ENCODE measurements at regions of chr10 and their contacts with region 1.

Region 1: DNA sequence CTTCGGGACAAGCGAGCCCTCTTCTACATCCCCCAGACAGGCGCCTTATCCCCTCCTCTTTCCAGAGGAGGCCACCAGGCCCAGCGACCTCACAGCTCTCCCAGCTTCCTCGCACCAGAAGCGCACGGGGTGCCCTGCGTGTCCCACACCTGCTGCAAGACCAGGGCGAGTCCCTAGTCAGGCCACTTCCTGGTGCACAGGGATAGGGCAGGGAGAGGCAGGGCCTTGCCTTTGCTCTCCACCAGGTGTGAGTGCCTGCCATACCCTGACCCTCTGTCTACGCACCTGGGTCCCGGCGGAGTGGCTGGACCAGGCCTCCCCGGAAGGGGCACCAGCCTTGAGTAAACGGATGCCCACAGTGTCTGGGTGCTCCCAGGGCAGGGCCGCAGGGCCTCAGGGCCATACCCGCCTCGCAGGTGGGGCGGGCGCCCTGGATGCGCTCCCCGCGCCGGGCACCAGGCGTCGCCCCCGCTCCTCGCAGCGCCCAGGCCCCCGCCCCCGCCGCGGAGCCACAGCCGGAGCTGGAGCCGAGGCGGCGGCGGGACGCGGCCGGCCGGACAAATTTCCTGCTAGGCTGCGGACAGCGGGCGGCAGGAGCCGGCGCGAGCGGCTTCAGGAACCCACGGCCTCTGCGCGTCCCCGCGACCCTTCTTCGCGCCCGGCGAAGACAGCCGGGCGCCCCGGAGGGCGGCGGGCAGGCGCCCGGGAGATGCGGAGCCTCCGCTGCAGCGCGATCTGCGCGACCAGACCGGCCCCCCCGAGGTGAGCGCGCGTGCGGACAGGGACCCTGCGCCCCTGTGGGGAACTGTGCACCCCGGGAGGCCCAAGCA is at the start of gene PTPRE:
- DNase-seq: peak in 1 of 2 donors; percentile 83
- H3K4me3 ChIP-seq: peak within 1 kb of the TSS; percentile 67 to 88
- H3K27ac ChIP-seq: peak within 1 kb of the TSS; percentile 72 to 91
- H3K4me1 ChIP-seq: peaks cover 0 to 11% of the 10 kb centered on the region in 2 donors
- H3K27me3 ChIP-seq: no peaks in the 10 kb centered on the region
- CTCF ChIP-seq: peak; percentile 56 to 97 (median 62)
- total RNA-seq, gene PTPRE: 14.5 TPM

Region 2: GRCh38 chr10:125982260-125982948 is 1924.4 kb before region 1 on chr10:
- intact Hi-C with region 1: no loop called
- DNase-seq: no peak
- H3K4me3 ChIP-seq: no peak overlapping the region
- H3K27ac ChIP-seq: no peak overlapping the region
- H3K4me1 ChIP-seq: no peaks in the 10 kb centered on the region
- H3K27me3 ChIP-seq: no peaks in the 10 kb centered on the region
- CTCF ChIP-seq: peak; percentile 59 to 70 (median 60)

Region 3: GRCh38 chr10:127797339-127797738 is 109.4 kb before region 1 on chr10:
- intact Hi-C with region 1: no loop called
- DNase-seq: no peak
- H3K4me3 ChIP-seq: no peak overlapping the region
- H3K27ac ChIP-seq: no peak overlapping the region
- H3K4me1 ChIP-seq: no peaks in the 10 kb centered on the region
- H3K27me3 ChIP-seq: no peaks in the 10 kb centered on the region
- CTCF ChIP-seq: no peak

Region 4: DNA sequence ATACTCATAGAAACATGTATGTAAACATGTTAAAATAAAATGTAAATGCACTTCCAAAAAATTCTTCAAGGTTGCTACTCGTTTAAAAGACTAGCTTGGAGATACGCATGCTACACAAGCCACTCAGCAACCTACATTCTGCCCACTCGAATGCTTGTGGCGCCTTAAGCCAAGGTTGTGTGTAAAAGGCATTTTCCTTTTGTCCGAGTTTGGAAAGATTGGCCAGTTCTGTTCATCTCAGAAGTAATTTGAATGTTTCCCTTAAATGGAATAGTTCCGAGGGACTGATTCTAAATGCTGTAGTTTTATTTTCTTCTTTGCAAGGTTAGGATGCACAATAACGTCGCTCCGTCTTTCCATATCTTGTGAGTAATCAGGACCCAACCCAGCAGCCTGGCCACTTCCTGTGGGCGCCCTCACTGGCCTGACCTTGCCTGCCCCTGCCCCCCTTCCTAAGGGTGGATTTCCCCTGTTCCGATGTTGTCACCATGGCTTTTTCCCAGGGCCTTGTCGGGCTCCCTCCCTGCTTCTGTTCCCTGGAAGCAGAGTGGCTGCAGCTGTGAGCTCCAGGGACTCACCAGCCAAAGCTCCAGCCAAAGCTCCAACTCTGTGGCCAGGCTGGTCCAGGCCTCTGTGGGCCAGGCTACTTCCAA is 70.7 kb after region 1 on chr10:
- intact Hi-C with region 1: loop called (anchors 5 kb)
- DNase-seq: peak; percentile 54 to 91
- H3K4me3 ChIP-seq: peak overlapping the region; percentile 41 to 53
- H3K27ac ChIP-seq: peak overlapping the region; percentile 74 to 75
- H3K4me1 ChIP-seq: peaks cover 7 to 17% of the 10 kb centered on the region in 2 donors
- H3K27me3 ChIP-seq: no peaks in the 10 kb centered on the region
- CTCF ChIP-seq: no peak

Region 5: GRCh38 chr10:127990846-127991542 is 84.2 kb after region 1 on chr10:
- intact Hi-C with region 1: loop called (anchors 5 kb)
- DNase-seq: peak in 1 of 2 donors; percentile 65
- H3K4me3 ChIP-seq: no peak overlapping the region
- H3K27ac ChIP-seq: peak overlapping the region; percentile 67 to 71
- H3K4me1 ChIP-seq: peaks cover 8 to 21% of the 10 kb centered on the region in 2 donors
- H3K27me3 ChIP-seq: no peaks in the 10 kb centered on the region
- CTCF ChIP-seq: no peak

Region 6: GRCh38 chr10:128011175-128011979 is 104.6 kb after region 1 on chr10:
- intact Hi-C with region 1: loop called (anchors 1 kb)
- DNase-seq: peak; percentile 23 to 87
- H3K4me3 ChIP-seq: no peak overlapping the region
- H3K27ac ChIP-seq: no peak overlapping the region
- H3K4me1 ChIP-seq: no peaks in the 10 kb centered on the region
- H3K27me3 ChIP-seq: no peaks in the 10 kb centered on the region
- CTCF ChIP-seq: peak; percentile 98 to 99 (median 99)

Region 7: DNA sequence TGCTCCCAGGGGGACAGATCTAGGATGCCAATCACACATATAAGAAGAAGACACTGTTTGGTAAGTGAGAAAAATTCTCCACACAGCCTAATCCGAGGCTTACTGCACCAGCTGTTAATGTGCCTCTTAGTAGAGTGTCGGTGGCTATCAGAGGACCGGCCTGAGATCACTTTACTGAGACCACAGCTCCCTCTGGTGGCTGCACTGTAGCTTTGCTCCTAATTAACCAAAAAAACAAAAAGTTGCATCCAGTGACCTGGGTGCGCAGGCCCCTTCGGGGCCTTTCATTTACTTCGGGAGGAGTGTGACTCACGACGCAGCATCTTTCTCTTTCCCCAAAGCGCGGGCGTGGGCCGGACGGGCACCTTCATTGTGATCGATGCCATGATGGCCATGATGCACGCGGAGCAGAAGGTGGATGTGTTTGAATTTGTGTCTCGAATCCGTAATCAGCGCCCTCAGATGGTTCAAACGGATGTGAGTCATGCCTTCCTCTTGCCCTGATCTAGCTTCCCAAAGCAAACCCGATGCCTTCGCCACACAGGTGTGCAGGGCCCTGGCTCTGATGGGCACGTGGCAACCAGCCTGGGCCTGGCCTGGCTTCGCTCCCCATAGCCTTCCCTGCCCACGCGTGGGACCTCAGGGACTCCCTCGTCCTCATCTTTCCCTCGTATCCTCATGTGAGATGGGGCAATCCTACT is 162.7 kb after region 1 on chr10:
- intact Hi-C with region 1: loop called (anchors 1 kb)
- DNase-seq: peak in 1 of 2 donors; percentile 80
- H3K4me3 ChIP-seq: no peak overlapping the region
- H3K27ac ChIP-seq: no peak overlapping the region
- H3K4me1 ChIP-seq: peaks cover 4 to 7% of the 10 kb centered on the region in 2 donors
- H3K27me3 ChIP-seq: no peaks in the 10 kb centered on the region
- CTCF ChIP-seq: peak; percentile 77 to 84 (median 84)

Measured in ascending aorta (tissue), 2 donors.